MCF 10A (cell line): ENCODE measurements at regions of chr6 and their contacts with region 1.

Region 1: DNA sequence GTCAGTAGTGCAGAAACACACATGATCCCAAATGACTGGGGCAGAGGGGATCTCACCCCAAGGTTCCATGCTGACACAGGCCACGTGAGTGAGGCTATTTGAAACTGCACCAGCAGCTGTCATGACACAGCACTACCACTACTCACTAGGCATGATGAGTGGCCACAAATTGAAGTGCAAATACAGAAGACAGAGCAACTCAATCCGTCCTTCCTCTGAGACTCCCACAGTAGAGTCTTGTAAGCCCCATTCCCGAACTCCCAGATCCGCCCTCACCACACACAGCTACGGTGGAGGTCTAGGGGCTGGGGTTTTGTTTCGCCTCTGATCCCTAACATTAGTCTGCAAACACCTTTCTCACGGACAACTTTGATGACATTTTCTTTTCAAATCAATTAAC is 113.3 kb upstream of the NUP153 start:
- DNase-seq: no peak
- H3K4me3 Mint-ChIP-seq: no peak overlapping the region
- H3K27ac Mint-ChIP-seq: no peak overlapping the region
- H3K4me1 Mint-ChIP-seq: no peaks in the 10 kb centered on the region
- H3K27me3 Mint-ChIP-seq: no peaks in the 10 kb centered on the region
- CTCF ChIP-seq: no peak

Region 2: DNA sequence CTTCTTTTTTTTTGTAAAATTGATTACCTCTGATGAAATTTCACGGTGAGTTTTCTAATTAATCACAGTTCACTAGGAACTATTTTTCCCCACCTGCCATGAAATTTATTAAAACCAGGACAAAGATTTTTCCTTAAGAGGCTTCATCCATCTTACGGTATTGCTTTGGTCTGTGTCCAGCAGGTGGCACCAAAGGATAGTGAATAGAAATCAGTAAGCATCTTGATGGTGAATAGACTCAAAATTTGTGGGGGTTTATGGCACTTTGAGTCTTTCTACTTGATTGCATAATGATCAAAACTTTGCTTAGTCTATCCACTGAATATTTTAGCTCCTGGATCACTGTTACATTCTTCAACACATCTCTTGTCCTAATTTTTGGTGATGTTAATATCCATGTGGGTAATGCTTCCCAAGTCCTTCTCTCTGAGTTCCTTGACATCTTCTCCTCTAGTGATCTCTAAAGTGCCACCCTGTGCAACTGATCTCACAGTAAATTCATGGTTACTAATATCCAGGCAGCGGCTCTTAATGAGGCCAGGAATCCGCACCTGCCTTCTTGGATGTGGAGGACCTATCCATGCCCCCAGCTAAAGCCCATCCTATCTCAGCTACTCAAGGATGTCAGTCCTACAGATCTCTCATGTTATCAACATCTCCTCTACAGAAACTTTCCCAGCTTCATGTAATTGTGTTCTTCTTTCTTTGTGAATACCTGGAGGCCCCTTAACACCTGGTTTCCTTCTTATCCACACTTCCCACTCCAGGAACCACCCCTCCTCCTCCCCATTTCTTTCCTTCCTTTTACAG is 663.7 kb before region 1 on chr6:
- CTCF ChIA-PET with region 1: interaction called, 10 read pairs
- POLR2A ChIA-PET with region 1: no interaction called
- intact Hi-C with region 1: loop called (anchors 5 kb)
- DNase-seq: peak; percentile 81
- H3K4me3 Mint-ChIP-seq: no peak overlapping the region
- H3K27ac Mint-ChIP-seq: no peak overlapping the region
- H3K4me1 Mint-ChIP-seq: no peaks in the 10 kb centered on the region
- H3K27me3 Mint-ChIP-seq: no peaks in the 10 kb centered on the region
- CTCF ChIP-seq: peak; percentile 65

Region 3: GRCh38 chr6:17589406-17590096 is 230.5 kb before region 1 on chr6:
- CTCF ChIA-PET with region 1: interaction called, 3 read pairs
- POLR2A ChIA-PET with region 1: no interaction called
- intact Hi-C with region 1: loop called (anchors 1 kb)
- DNase-seq: peak; percentile 74
- H3K4me3 Mint-ChIP-seq: no peak overlapping the region
- H3K27ac Mint-ChIP-seq: no peak overlapping the region
- H3K4me1 Mint-ChIP-seq: no peaks in the 10 kb centered on the region
- H3K27me3 Mint-ChIP-seq: no peaks in the 10 kb centered on the region
- CTCF ChIP-seq: no peak

Region 4: DNA sequence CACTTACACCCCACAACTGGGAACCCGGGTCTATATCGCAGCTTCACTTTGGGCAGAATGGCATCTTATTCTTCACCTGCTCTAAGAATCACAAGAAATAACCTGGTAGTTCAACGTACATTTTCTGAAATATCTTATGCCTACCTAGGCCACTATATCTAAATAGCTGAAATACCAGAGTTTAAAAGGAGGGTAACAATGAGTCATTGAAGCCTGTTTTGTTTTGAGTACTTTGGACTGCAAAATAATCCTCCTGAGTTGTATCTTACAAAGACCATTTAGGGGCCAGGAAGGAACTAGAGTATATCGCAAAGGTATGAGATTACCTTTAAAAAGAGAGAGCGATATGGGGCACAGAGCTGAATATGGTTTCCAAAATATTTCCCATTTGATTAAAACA is 16.6 kb before region 1 on chr6:
- CTCF ChIA-PET with region 1: interaction called, 54 read pairs
- POLR2A ChIA-PET with region 1: interaction called, 4 read pairs
- intact Hi-C with region 1: no loop called
- DNase-seq: no peak
- H3K4me3 Mint-ChIP-seq: no peak overlapping the region
- H3K27ac Mint-ChIP-seq: no peak overlapping the region
- H3K4me1 Mint-ChIP-seq: peaks cover 6% of the 10 kb centered on the region
- H3K27me3 Mint-ChIP-seq: no peaks in the 10 kb centered on the region
- CTCF ChIP-seq: no peak

Region 5: GRCh38 chr6:17907406-17908229 is 87.6 kb after region 1 on chr6:
- CTCF ChIA-PET with region 1: interaction called, 10 read pairs
- POLR2A ChIA-PET with region 1: interaction called, 3 read pairs
- intact Hi-C with region 1: loop called (anchors 10 kb)
- DNase-seq: peak; percentile 99
- H3K4me3 Mint-ChIP-seq: peak overlapping the region; percentile 42
- H3K27ac Mint-ChIP-seq: peak overlapping the region; percentile 92
- H3K4me1 Mint-ChIP-seq: peaks cover 42% of the 10 kb centered on the region
- H3K27me3 Mint-ChIP-seq: no peaks in the 10 kb centered on the region
- CTCF ChIP-seq: peak; percentile 28

Region 6: GRCh38 chr6:17987576-17988421 is 167.7 kb after region 1 on chr6 and contains the start of gene KIF13A:
- CTCF ChIA-PET with region 1: interaction called, 4 read pairs
- POLR2A ChIA-PET with region 1: interaction called, 3 read pairs
- intact Hi-C with region 1: loop called (anchors 5 kb)
- DNase-seq: peak; percentile 46
- H3K4me3 Mint-ChIP-seq: peak within 1 kb of the TSS; percentile 83
- H3K27ac Mint-ChIP-seq: peak within 1 kb of the TSS; percentile 88
- H3K4me1 Mint-ChIP-seq: peaks cover 32% of the 10 kb centered on the region
- H3K27me3 Mint-ChIP-seq: no peaks in the 10 kb centered on the region
- CTCF ChIP-seq: no peak
- total RNA-seq, gene KIF13A: 24.1 and 33.5 TPM in 2 replicates